Gastrocnemius medialis (tissue), 4 donors: ENCODE measurements at regions of chr4 and their contacts with region 1.

Region 1: DNA sequence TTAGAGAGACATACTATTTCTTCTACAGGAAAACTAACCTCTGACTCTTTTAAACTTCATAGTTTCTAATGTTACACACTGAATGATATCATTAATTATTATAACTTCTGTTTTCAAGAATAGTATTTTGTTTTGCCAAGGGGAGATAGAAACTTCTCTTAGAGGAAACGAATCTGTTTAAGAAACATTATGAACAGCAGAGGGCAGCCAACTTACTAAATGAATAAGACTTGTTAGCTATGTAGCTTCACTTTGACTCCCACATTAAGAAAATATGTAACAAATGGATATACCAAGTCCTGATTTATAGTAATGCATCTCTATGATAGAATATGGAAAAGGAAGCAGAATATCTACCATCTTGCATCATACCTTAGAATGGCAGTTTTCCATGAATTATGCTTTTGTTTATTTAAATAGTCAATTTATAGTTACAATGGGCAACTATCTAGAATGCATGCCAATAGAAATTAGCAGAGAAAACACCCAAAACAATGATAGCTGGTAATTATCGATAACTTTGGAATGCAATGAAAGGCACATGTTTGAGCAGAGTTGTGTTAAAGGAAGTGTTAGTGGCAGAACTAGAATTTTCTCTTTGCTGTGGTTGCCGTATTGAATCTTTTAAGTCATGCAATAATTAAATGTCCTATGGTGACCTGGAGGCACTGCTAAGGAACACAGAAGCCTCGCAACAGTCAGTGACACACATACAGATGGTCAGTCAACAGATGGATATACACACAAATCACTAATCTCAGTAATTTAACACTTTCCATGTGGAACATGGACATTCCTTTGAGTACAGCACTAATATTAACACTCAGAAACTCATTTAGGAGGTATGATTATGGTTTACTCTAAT is 105.7 kb upstream of the PDLIM3 start:
- DNase-seq: no peak
- ATAC-seq: no peak
- H3K4me3 ChIP-seq: no peak overlapping the region
- H3K27ac ChIP-seq: no peak overlapping the region
- H3K4me1 ChIP-seq: no peaks in the 10 kb centered on the region
- H3K27me3 ChIP-seq: peaks cover 0 to 15% (median 0%) of the 10 kb centered on the region in 3 donors
- CTCF ChIP-seq: peak in 3 of 5 experiments; percentile 27 to 43 (median 39)
- POLR2A ChIP-seq: no peak

Region 2: GRCh38 chr4:184627765-184628480 is 1013.1 kb before region 1 on chr4:
- in situ Hi-C with region 1: no loop called
- intact Hi-C with region 1: no loop called
- DNase-seq: no peak
- ATAC-seq: no peak
- H3K4me3 ChIP-seq: no peak overlapping the region
- H3K27ac ChIP-seq: no peak overlapping the region
- H3K4me1 ChIP-seq: no peaks in the 10 kb centered on the region
- H3K27me3 ChIP-seq: no peaks in the 10 kb centered on the region
- CTCF ChIP-seq: no peak
- POLR2A ChIP-seq: no peak

Region 3: GRCh38 chr4:186021461-186022167 is 380.6 kb after region 1 on chr4:
- in situ Hi-C with region 1: loop called in 1 of 4 experiments (anchors 10 kb)
- intact Hi-C with region 1: no loop called
- DNase-seq: no peak
- ATAC-seq: peak in 1 of 2 donors; percentile 26
- H3K4me3 ChIP-seq: no peak overlapping the region
- H3K27ac ChIP-seq: no peak overlapping the region
- H3K4me1 ChIP-seq: no peaks in the 10 kb centered on the region
- H3K27me3 ChIP-seq: no peaks in the 10 kb centered on the region
- CTCF ChIP-seq: peak in 4 of 5 experiments; percentile 31 to 57 (median 46)
- POLR2A ChIP-seq: no peak

Region 4: DNA sequence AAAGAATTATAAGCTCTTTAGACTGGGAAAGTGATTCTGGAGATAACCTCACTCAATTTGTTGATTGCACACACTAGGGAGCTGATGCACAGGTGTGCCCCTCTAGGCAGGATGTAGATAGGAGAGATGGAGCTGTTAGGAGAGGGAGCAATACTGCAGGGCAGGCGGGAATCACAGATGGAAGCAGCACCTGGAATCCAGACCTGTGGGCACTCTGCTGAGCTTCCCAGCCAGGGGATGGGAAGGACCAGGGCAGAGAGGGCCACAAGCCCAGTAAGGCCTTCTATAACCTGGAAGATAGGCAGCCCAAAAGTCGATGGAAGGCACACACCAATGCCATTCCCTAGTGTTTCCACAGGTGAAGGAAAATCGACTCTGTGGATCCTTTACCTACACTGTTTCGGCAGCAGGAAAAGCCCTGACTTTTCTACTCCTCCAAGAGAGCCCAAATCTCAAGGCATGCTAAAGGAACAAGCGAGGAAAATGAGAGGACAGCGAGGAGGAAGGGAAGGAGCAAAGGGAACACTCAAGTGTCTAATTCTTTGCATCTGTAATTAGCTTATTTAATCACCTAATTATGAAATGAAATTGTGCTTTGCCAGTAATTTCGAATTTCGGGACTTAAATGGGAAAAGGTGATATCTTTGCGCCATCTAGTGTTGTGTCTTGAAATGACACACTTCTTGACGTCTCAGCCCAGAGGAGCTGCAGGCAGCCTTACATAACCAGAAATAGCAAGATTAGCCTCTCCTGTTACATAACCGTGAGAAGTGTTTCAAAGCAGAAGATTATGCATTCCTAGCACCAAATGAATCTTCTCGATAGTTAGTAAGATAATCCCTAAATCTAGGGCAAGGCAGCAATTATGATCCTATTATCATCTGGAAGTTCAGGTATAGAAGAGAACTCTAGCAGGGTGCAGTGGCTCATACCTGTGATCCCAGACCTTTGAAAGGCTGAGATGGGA is 396.9 kb after region 1 on chr4:
- in situ Hi-C with region 1: loop called in 3 of 4 experiments (anchors 5 to 10 kb)
- intact Hi-C with region 1: loop called (anchors 1 kb)
- DNase-seq: no peak
- ATAC-seq: peak; percentile 72
- H3K4me3 ChIP-seq: no peak overlapping the region
- H3K27ac ChIP-seq: no peak overlapping the region
- H3K4me1 ChIP-seq: no peaks in the 10 kb centered on the region
- H3K27me3 ChIP-seq: no peaks in the 10 kb centered on the region
- CTCF ChIP-seq: peak; percentile 59 to 79 (median 76)
- POLR2A ChIP-seq: no peak